K562 (cell line): ENCODE measurements at regions of chr15 and their contacts with region 1.

Region 1: GRCh38 chr15:22838292-22839042 is at the start of gene NIPA2:
- DNase-seq: peak; percentile 96 to 98 (median 97)
- ATAC-seq: peak; percentile 97
- H3K4me3 ChIP-seq: peak within 1 kb of the TSS; percentile 97
- H3K27ac ChIP-seq: peak within 1 kb of the TSS; percentile 94
- H3K4me1 ChIP-seq: peaks cover 11 to 21% of the 10 kb centered on the region in 2 experiments; a peak in 4 of 5 replicates
- H3K27me3 ChIP-seq: no peaks in the 10 kb centered on the region
- CTCF ChIP-seq: peak in 1 of 3 experiments; percentile 18; a peak in 1 of 6 replicates
- EP300 ChIP-seq: no peak
- POLR2A ChIP-seq: peak; percentile 94
- RAD21 ChIP-seq: peak; percentile 19 to 32; a peak in 1 of 4 replicates
- polyA plus RNA-seq, gene NIPA2: 18.7 to 22.7 TPM

Region 2: GRCh38 chr15:22780267-22780666 is 58.2 kb before region 1 on chr15:
- CTCF ChIA-PET with region 1: no interaction called
- POLR2A ChIA-PET with region 1: interaction called, 3 read pairs
- in situ Hi-C with region 1: no loop called
- intact Hi-C with region 1: loop called (anchors 5 kb)
- DNase-seq: no peak
- ATAC-seq: no peak
- H3K4me3 ChIP-seq: no peak overlapping the region
- H3K27ac ChIP-seq: no peak overlapping the region
- H3K4me1 ChIP-seq: peaks cover 17% of the 10 kb centered on the region in 2 experiments
- H3K27me3 ChIP-seq: no peaks in the 10 kb centered on the region
- CTCF ChIP-seq: no peak
- EP300 ChIP-seq: no peak
- POLR2A ChIP-seq: no peak
- RAD21 ChIP-seq: no peak

Region 3: GRCh38 chr15:22827125-22827524 is 11.3 kb before region 1 on chr15:
- CTCF ChIA-PET with region 1: no interaction called
- POLR2A ChIA-PET with region 1: interaction called, 21 read pairs
- in situ Hi-C with region 1: no loop called
- intact Hi-C with region 1: no loop called
- DNase-seq: no peak
- ATAC-seq: no peak
- H3K4me3 ChIP-seq: no peak overlapping the region
- H3K27ac ChIP-seq: no peak overlapping the region
- H3K4me1 ChIP-seq: no peaks in the 10 kb centered on the region; a peak in 1 of 5 replicates
- H3K27me3 ChIP-seq: no peaks in the 10 kb centered on the region
- CTCF ChIP-seq: no peak
- EP300 ChIP-seq: no peak
- POLR2A ChIP-seq: no peak
- RAD21 ChIP-seq: no peak

Region 4: GRCh38 chr15:22936577-22937472 is 98.4 kb after region 1 on chr15:
- CTCF ChIA-PET with region 1: no interaction called
- POLR2A ChIA-PET with region 1: no interaction called
- in situ Hi-C with region 1: no loop called
- intact Hi-C with region 1: no loop called
- DNase-seq: no peak
- ATAC-seq: no peak
- H3K4me3 ChIP-seq: no peak overlapping the region
- H3K27ac ChIP-seq: no peak overlapping the region
- H3K4me1 ChIP-seq: peaks cover 0 to 4% of the 10 kb centered on the region in 2 experiments; a peak in 2 of 5 replicates
- H3K27me3 ChIP-seq: no peaks in the 10 kb centered on the region
- CTCF ChIP-seq: no peak
- EP300 ChIP-seq: no peak
- POLR2A ChIP-seq: no peak
- RAD21 ChIP-seq: no peak